ENCODE measurements at regions of chr11 and their contacts with region 1.

Region 1: GRCh38 chr11:123511037-123511870 is 81.2 kb downstream of the GRAMD1B start:
- DNase-seq: peak; percentile 87 to 94 (median 92)
- ATAC-seq: peak; percentile 94
- H3K4me3 ChIP-seq: no peak overlapping the region
- H3K27ac ChIP-seq: no peak overlapping the region
- H3K4me1 ChIP-seq: no peaks in the 10 kb centered on the region
- H3K27me3 ChIP-seq: no peaks in the 10 kb centered on the region

Region 2: DNA sequence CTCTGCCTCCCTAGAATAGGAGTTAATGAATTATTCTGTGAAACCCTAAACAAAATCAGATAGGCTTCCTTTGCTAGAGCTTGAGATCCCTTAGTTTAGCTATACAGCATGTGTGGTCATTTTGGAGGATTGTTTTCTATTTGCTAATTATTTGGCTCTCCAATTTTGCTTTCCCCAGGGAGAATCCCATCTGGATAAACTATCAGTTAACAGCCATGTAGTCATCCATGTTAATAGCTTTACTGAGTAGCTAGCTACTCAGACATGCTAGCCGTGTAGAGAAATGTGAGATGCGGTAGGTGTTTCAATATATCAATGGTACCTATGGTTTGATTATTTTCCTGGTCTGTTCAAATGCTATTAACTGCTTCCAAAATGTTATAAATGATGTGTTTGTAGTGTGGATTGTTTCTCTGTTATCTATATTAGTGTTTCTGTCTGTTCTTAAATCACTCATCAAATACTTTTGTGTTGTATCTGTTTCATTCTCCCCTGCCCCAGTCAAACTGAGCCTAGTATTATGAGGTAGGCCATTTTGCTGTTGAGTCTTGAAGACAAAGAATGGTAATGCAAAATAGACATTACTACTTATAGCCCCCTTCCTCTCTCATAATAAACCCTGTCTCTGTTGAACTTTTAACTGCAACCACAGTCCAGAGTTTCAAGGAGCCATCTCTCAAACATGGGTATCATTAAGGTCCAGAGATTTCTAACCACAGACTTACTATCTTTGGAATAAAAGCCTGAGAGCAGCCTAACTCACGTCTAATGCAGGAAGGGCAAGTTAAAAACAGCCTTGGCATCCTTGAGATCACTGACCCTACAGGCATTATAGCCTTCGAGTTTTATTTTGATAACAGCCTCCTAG is 137.3 kb before region 1 on chr11:
- intact Hi-C with region 1: no loop called
- DNase-seq: no peak
- ATAC-seq: no peak
- H3K4me3 ChIP-seq: no peak overlapping the region
- H3K27ac ChIP-seq: no peak overlapping the region
- H3K4me1 ChIP-seq: no peaks in the 10 kb centered on the region
- H3K27me3 ChIP-seq: no peaks in the 10 kb centered on the region

Region 3: GRCh38 chr11:123549926-123550917 is 39.0 kb after region 1 on chr11:
- intact Hi-C with region 1: loop called in 3 of 4 experiments (anchors 5 kb)
- DNase-seq: no peak
- ATAC-seq: no peak
- H3K4me3 ChIP-seq: no peak overlapping the region
- H3K27ac ChIP-seq: no peak overlapping the region
- H3K4me1 ChIP-seq: no peaks in the 10 kb centered on the region
- H3K27me3 ChIP-seq: no peaks in the 10 kb centered on the region

Region 4: GRCh38 chr11:123560006-123560405 is 48.8 kb after region 1 on chr11:
- intact Hi-C with region 1: loop called in 3 of 4 experiments (anchors 5 kb)
- DNase-seq: peak; percentile 76 to 89 (median 89)
- ATAC-seq: peak; percentile 90
- H3K4me3 ChIP-seq: peak overlapping the region; percentile 27
- H3K27ac ChIP-seq: no peak overlapping the region
- H3K4me1 ChIP-seq: no peaks in the 10 kb centered on the region
- H3K27me3 ChIP-seq: no peaks in the 10 kb centered on the region

Region 5: DNA sequence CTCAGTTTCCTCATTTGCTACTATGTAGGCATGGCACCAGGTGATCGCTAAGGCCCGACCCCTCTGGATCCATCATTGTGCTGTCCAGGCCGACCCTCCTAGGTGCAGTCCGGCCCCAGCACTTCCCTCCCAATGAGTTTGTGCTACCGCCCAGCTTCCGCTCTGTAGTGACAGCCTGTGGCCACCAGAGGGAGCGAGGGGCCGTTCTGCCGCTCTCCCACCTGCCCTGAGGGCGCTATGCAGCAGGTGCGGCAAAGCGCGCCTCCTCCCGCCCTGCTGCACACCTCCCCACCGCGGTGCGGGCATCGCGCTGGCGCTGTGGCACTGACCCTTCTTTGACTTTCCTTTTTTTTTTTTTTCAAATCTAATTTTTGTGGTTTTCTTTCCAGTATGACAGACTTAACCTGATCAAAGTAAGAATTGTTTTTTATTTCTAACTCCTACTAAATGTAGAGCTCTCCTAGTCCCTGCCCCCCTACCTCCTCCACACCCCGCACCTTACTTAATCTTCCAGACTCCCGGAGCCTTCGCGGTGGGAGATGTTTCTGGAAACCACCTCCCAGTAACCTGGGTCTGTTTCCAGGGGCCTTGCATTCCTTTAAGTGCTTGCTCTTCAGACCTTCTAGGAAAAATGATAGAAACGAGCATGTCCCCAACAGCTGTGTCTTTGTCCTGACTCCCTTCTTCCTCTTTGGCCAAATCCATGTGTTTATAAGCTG is 69.5 kb after region 1 on chr11:
- intact Hi-C with region 1: loop called (anchors 2 to 5 kb)
- DNase-seq: peak; percentile 41 to 78 (median 77)
- ATAC-seq: peak; percentile 58 to 66
- H3K4me3 ChIP-seq: no peak overlapping the region
- H3K27ac ChIP-seq: no peak overlapping the region
- H3K4me1 ChIP-seq: no peaks in the 10 kb centered on the region
- H3K27me3 ChIP-seq: no peaks in the 10 kb centered on the region

Region 6: DNA sequence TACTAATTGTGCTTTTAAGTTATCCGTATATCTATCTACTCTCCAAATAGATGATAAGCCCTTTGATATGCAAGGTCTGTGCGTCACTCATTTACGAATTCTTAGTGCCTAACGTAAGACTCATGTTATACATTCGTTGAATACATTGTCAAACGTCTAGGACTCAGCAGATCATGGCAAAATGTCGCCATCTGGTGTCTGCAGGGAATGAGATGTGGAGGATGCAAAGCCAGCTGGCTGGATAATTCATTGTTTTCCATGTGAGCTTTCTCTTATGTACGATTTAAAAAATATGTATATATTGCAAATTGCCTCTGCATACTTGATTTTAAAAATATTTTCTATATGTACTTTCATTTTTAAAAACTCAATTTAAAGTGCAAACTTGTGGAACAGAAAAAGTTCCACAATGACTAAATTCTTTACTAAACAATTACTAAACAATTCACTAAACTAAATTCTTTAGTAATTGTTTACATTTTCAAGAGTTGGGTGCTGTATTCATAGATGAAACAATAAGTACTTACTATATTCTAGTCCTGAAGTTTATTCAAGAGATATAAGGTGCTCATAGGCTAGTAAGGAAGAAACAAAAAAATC is 196.5 kb after region 1 on chr11:
- intact Hi-C with region 1: loop called in 1 of 4 experiments (anchors 5 kb)
- DNase-seq: peak; percentile 33 to 72 (median 55)
- ATAC-seq: peak in 1 of 2 donors; percentile 59
- H3K4me3 ChIP-seq: no peak overlapping the region
- H3K27ac ChIP-seq: no peak overlapping the region
- H3K4me1 ChIP-seq: no peaks in the 10 kb centered on the region
- H3K27me3 ChIP-seq: no peaks in the 10 kb centered on the region

Measured in right cardiac atrium (tissue), 5 donors.